Activated T-helper 1 cell treated with anti-CD3 and anti-CD28 coated beads, Interleukin-12 subunit alpha, Interleukin-12 subunit beta, Interleukin-2, Interleukin-4 antibody, amounts not matched to agents 30 ng/mL and 10 ng/mL and 1 ng/mL, durations not matched to agents 14 hours and 24 hours and 36 hours (primary cell): ENCODE measurements at regions of chr2 and their contacts with region 1.

Region 1: DNA sequence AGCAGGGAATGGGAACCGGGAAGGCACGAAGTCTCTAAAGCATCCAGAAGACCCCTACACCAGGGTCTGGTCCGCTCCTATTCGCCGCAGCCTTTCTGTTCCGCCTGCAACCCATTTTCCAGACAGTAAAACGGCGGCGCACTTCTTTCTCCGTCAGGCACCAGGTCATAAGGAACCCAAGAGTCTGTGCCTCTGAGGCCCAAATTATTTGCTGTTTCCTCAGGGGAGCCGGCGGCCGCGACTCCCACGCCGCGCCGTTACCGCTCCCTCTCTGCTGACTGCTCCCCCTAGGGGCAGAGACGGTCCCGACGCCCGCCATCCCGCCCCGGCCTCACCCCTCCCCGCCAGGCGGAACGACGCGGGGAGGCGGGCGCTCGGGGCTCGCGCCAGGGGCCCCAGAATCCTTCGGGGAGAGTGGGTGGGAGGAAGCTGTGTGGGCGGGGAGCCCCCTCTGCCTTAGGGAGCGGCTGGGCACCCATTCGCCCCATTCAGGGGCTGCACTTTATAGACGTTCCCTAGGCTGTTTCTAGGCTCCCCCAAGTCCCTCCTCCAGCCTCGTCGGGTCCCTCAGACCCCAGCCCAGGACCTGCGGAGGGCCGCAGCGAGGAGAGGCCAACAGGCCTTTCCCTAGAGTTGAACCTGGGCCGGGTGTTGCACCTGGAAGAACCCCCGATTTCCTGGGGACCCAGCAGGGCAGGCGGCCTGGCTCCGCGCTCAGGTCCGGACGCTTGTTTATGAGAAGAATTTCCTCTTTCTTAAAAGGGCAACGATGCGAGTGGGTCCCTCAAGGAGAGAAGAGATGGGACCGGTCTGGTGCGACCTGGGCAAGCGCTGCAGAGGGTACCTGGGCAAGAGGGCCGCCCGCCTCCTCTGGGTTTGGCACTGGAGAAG is 3.6 kb upstream of the CTDSP1 start:
- DNase-seq: peak; percentile 93
- H3K4me3 Mint-ChIP-seq: peak overlapping the region; percentile 94
- H3K27ac Mint-ChIP-seq: peak overlapping the region; percentile 98
- H3K4me1 Mint-ChIP-seq: peaks cover 40% of the 10 kb centered on the region
- H3K27me3 Mint-ChIP-seq: peaks cover 3% of the 10 kb centered on the region

Region 2: GRCh38 chr2:218145125-218145524 is 250.9 kb before region 1 on chr2:
- intact Hi-C with region 1: no loop called
- DNase-seq: no peak
- H3K4me3 Mint-ChIP-seq: no peak overlapping the region
- H3K27ac Mint-ChIP-seq: no peak overlapping the region
- H3K4me1 Mint-ChIP-seq: peaks cover 6% of the 10 kb centered on the region
- H3K27me3 Mint-ChIP-seq: peaks cover 11% of the 10 kb centered on the region

Region 3: GRCh38 chr2:218186355-218186766 is 209.7 kb before region 1 on chr2:
- intact Hi-C with region 1: loop called (anchors 10 kb)
- DNase-seq: peak; percentile 47
- H3K4me3 Mint-ChIP-seq: no peak overlapping the region
- H3K27ac Mint-ChIP-seq: no peak overlapping the region
- H3K4me1 Mint-ChIP-seq: peaks cover 10% of the 10 kb centered on the region
- H3K27me3 Mint-ChIP-seq: peaks cover 5% of the 10 kb centered on the region

Region 4: GRCh38 chr2:218286570-218287459 is 109.2 kb before region 1 on chr2:
- intact Hi-C with region 1: loop called (anchors 1 kb)
- DNase-seq: peak; percentile 82
- H3K4me3 Mint-ChIP-seq: peak overlapping the region; percentile 94
- H3K27ac Mint-ChIP-seq: peak overlapping the region; percentile 99
- H3K4me1 Mint-ChIP-seq: peaks cover 72% of the 10 kb centered on the region
- H3K27me3 Mint-ChIP-seq: no peaks in the 10 kb centered on the region

Region 5: DNA sequence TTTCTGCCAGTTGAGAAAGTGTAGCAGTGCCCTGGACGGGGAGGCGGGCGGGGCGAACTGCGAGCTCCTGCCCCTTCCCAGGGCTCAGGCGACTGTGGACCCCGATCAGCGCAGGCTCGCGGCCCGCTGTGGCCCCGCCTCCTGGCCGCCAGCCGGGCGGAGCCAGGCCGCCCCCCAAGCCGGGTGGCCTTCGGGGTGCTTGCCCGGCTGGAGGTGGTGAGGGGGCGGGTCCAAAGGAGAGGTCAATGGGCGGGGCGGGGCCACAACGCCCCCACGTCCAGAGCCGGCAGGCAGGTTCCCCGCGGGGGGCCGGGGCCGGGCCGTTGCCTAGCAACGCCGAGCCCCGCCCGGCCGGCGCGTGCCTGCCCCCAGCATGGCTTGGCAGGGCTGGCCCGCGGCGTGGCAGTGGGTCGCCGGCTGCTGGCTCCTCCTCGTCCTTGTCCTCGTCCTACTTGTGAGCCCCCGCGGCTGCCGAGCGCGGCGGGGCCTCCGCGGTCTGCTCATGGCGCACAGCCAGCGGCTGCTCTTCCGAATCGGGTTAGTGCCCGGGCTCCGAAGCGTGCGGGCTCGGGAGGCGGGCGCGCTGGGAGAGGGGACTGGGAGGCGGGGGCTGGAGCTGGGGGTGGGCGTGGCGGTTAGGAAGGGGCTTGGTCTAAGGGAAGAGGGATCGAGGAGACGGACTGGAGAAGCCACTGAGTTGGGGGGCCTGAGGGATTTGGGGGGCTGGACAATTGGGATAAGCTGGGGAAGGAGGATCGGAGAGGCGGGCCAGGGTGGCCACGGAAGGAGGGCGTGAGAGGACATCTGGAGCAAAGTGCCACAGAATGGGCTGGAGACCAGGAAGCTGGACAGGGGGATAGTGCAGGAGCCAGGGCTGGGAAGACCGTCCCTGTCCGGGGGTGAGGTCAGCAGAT is 72.9 kb before region 1 on chr2:
- intact Hi-C with region 1: loop called (anchors 2 kb)
- DNase-seq: peak; percentile 28
- H3K4me3 Mint-ChIP-seq: peak overlapping the region; percentile 84
- H3K27ac Mint-ChIP-seq: no peak overlapping the region
- H3K4me1 Mint-ChIP-seq: peaks cover 22% of the 10 kb centered on the region
- H3K27me3 Mint-ChIP-seq: peaks cover 20% of the 10 kb centered on the region

Region 6: DNA sequence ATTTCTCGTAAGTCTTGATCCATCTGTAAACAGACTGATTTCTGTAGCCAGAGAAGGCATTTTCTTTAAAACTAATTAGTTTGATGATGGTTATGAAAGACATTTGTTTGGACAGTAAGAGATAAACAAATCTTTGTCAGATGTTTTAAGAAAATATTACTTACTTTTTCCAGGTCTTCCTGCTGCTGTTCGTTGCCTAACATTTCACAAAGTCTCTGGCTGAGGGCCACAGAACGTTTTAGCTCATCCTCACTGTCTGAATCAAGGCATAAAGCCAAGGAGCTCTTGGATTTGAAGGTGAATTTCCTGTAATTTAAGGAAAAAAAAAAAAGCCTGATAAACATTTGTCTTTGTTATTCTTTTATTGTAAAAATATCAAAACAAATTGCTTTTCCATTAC is 80.6 kb after region 1 on chr2:
- intact Hi-C with region 1: no loop called
- DNase-seq: no peak
- H3K4me3 Mint-ChIP-seq: no peak overlapping the region
- H3K27ac Mint-ChIP-seq: no peak overlapping the region
- H3K4me1 Mint-ChIP-seq: no peaks in the 10 kb centered on the region
- H3K27me3 Mint-ChIP-seq: no peaks in the 10 kb centered on the region

Region 7: DNA sequence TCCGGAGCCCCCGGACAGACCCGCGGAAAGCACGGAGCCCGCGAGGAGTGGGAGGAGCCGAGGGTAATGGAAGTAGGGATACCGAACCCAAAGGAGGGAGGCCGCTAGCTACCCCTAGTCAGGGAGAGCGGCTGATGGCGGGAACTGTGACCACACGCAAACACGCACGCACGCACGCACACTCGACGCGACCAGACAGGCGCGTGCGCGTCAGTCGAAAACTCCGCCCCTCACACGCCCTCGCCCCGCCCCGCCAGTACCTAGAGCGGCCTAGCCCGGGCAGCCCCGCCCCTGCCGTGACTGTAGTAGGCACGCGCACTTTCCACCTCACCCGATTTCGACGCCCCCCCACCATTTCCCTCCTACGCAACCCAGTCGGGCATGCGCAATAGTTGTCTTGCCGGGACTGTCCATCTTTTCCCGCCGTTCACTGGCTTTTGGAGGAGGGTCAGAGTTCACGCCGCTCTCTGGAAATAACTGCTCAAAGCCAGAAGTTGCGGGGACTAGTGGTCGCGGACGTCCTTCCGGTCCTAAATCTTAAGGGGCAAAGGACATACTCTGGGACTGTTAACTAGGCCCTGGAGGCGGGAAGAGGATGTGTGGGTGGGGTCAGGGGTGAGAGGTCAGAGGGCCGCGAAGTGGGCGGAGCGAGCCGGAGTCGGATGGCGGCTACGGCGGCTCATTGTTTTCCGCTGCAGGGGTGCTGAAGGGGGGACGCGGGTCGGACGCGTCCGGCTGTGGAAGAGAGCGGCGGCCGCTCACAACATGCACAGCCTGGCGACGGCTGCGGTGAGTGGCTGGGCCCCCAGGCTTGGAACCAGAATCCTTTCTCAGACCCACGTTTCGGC is 172.4 kb after region 1 on chr2 and contains the starts of genes CNOT9 and USP37:
- intact Hi-C with region 1: loop called (anchors 1 kb)
- DNase-seq: peak; percentile 100
- H3K4me3 Mint-ChIP-seq: peak within 1 kb of the TSS; percentile 94
- H3K27ac Mint-ChIP-seq: peak within 1 kb of the TSS; percentile 99
- H3K4me1 Mint-ChIP-seq: peaks cover 59% of the 10 kb centered on the region
- H3K27me3 Mint-ChIP-seq: peaks cover 3% of the 10 kb centered on the region
- total RNA-seq, gene CNOT9: 138 TPM in 2 replicates
- total RNA-seq, gene USP37: 43.5 and 50.4 TPM in 2 replicates

Region 8: GRCh38 chr2:218852911-218853667 is 457.0 kb after region 1 on chr2:
- intact Hi-C with region 1: no loop called
- DNase-seq: peak; percentile 18
- H3K4me3 Mint-ChIP-seq: no peak overlapping the region
- H3K27ac Mint-ChIP-seq: no peak overlapping the region
- H3K4me1 Mint-ChIP-seq: no peaks in the 10 kb centered on the region
- H3K27me3 Mint-ChIP-seq: peaks cover 63% of the 10 kb centered on the region

Region 9: GRCh38 chr2:218898109-218898878 is 502.3 kb after region 1 on chr2:
- intact Hi-C with region 1: loop called (anchors 5 kb)
- DNase-seq: peak; percentile 71
- H3K4me3 Mint-ChIP-seq: peak overlapping the region; percentile 73
- H3K27ac Mint-ChIP-seq: peak overlapping the region; percentile 86
- H3K4me1 Mint-ChIP-seq: peaks cover 42% of the 10 kb centered on the region
- H3K27me3 Mint-ChIP-seq: peaks cover 56% of the 10 kb centered on the region

Region 10: GRCh38 chr2:219278655-219279516 is 882.8 kb after region 1 on chr2 and contains the start of gene DNAJB2:
- intact Hi-C with region 1: loop called (anchors 2 kb)
- DNase-seq: peak; percentile 99
- H3K4me3 Mint-ChIP-seq: peak within 1 kb of the TSS; percentile 94
- H3K27ac Mint-ChIP-seq: peak within 1 kb of the TSS; percentile 99
- H3K4me1 Mint-ChIP-seq: peaks cover 45% of the 10 kb centered on the region
- H3K27me3 Mint-ChIP-seq: peaks cover under 1% of the 10 kb centered on the region
- total RNA-seq, gene DNAJB2: 40.8 and 45.3 TPM in 2 replicates